Right ventricle myocardium superior (tissue), 1 donor: ENCODE measurements at regions of chr2 and their contacts with region 1.

Region 1: DNA sequence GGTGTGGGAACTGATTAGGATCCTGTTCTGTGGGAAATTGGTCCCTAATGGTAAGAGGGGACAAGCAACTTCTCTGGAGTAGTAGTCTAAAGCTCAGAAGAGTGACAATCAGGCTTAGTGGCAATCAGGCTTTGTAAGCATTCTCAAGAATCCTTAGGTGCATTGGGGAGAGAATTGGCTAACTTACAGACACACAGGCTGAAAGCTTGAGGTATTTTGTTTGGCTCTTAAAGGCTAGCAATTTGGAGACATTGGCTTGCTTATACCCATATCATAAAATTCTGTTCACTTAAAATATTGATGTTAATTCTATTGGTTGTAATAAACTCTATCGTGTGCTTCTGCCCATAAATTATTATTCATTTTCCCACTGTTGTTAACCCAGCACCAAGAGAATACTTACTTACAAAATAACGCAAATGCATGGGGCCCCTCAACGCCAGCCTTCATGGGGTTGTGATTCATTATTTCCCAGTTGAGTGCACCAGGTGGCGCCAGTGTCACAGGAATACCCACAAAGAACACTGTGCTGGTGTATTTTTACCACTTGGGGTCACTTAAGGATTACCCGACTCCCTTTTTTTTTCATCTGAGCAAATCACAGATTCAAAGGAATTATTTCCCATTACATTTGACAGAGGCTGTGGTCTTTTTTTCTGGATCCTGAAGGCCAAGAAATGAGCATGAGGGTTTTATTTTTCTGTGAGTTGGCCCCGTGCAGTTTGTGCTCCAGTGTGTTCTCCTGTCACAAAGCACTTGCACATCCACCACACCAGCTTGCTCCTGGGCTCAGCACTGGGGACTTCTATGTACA is 45.5 kb downstream of the DDX1 start:
- DNase-seq: peak; percentile 72
- ATAC-seq: peak; percentile 92

Region 2: GRCh38 chr2:15539999-15540398 is 97.2 kb before region 1 on chr2:
- intact Hi-C with region 1: no loop called
- DNase-seq: no peak
- ATAC-seq: no peak

Region 3: GRCh38 chr2:15912205-15912604 is 275.0 kb after region 1 on chr2:
- intact Hi-C with region 1: loop called (anchors 10 kb)
- DNase-seq: peak; percentile 72
- ATAC-seq: peak; percentile 85

Region 4: DNA sequence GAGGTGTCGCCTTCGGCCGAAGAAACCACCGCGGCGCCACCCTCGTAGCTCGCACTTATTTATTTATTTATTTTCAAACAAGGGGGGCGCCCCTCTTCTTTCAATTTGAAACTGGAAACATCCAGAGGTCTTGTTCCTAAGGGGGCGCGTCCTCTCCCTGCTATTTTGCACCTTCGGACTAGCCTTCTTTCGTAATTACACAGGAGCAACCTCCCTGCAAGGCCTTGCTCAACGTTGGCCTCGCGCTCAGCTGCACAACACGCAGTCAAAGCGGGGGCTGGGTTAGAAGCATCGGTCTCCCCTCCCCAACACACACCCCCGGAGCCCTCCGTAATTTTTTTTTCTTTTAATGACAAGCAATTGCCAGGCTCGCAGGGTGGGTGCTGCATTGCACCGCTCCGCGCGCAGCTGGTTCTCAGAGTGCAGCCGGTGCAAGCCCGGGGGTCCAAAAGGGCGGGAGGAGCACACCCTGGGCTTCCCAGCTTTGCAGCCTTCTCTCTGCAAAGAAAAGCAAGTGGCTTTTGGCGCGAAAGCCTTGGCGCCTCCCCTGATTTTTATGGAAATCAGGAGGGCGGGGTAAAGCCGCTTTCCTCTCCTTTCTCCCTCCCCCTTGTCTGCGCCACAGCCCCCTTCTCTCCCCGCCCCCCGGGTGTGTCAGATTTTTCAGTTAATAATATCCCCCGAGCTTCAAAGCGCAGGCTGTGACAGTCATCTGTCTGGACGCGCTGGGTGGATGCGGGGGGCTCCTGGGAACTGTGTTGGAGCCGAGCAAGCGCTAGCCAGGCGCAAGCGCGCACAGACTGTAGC is 302.9 kb after region 1 on chr2 and contains the start of gene MYCN:
- intact Hi-C with region 1: no loop called
- DNase-seq: peak; percentile 53
- ATAC-seq: peak; percentile 46
- total RNA-seq, gene MYCN: 0.24 TPM

Region 5: GRCh38 chr2:15982285-15983044 is 345.3 kb after region 1 on chr2:
- intact Hi-C with region 1: no loop called
- DNase-seq: no peak
- ATAC-seq: no peak

Region 6: GRCh38 chr2:16281451-16282336 is 644.5 kb after region 1 on chr2:
- intact Hi-C with region 1: loop called (anchors 5 kb)
- DNase-seq: no peak
- ATAC-seq: peak; percentile 67

Region 7: DNA sequence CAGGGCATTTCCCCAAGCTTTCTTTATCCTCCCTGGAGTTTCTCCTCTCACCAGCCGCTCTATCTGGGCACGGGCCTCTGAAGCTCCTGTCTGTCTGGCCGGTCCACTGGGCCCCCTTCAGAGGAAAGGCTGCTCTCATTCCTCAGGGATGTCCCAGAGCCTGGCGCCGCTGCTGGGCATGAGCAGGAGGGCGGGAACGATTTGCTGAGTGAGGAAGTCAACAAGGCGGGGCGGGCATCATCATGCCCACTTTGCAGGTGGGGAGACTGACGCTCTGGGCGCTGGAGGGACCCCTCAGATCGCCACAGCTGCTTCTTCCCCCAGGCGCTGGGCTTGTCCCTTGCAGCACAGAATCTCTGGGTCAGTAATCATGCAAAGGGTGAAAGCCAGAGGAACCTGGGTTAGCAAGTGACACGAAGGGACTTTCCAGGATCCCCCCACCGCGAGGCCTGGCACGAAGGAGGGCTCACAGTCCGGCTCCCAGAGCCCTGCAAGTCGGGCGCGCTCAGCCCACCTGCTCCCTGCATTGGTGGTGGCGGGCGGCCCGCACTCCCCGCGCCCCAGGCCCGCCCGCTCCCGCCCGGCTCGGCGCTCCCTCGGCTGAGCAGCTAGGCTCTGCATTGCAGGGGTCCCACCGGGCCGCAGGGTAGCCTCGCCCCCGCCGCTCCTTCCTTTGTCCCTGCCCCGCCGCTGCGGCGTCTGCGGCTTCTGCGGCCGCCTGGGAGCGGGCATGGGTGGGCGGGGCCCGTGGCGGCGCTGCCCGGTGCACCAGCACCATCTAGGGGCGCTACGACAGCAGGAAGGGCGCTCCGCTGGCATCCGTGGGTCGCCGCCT is 870.7 kb after region 1 on chr2:
- intact Hi-C with region 1: loop called (anchors 5 kb)
- DNase-seq: peak; percentile 50
- ATAC-seq: peak; percentile 94